ENCODE measurements at regions of chr2 and their contacts with region 1.

Region 1: GRCh38 chr2:102418421-102418961 is 4.5 kb upstream of the IL18RAP start:
- DNase-seq: no peak
- ATAC-seq: peak; percentile 79
- H3K4me3 Mint-ChIP-seq: peak overlapping the region; percentile 73
- H3K27ac Mint-ChIP-seq: peak overlapping the region; percentile 86
- H3K4me1 Mint-ChIP-seq: peaks cover 63% of the 10 kb centered on the region
- H3K27me3 Mint-ChIP-seq: no peaks in the 10 kb centered on the region

Region 2: DNA sequence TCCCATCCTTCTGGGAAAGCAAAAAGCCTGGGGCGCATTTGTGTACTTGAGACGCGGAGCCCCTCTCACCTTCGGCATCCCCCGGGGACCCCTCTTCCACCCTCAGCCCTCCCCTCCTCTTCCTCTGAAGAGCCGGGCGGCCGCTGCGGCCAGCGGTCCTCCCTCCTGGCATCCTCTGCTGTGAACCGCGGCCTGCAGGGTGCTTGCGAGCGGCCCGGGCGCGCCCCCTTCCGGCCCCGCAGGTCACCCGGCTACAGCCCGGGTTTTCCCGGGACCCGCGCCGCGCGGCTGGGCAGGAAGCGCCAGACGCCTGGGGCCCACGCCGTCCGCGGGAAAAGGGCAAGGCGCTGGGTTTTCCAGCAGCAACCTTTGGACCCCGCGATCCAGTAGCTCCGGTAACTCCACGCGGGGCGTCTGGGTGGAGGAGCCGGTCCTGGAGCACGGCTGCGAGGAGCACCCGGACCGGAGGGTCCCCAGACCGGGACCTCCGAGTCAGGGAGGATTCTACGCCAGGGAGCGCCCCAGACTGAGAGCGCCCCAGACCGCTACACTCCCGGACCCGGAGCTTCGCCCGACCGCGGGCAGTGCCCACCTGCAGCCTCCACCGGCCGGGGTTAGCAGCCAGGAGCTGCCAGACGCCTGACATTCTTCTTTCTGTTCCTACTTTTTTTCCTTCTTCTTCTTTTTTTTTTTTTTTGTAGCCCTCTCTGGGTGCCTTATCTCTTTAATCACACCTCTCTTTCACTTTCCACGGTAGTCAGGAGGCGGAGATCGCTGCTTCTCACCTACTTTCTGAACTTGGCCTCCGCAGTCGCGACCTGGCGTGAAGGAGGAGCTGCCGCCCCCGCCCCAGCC is 62.7 kb before region 1 on chr2 and contains the start of gene IL18R1:
- CTCF ChIA-PET with region 1: interaction called, 11 read pairs
- DNase-seq: peak; percentile 78
- ATAC-seq: peak; percentile 93
- H3K4me3 Mint-ChIP-seq: peak within 1 kb of the TSS; percentile 98
- H3K27ac Mint-ChIP-seq: peak within 1 kb of the TSS; percentile 92
- H3K4me1 Mint-ChIP-seq: peaks cover 38% of the 10 kb centered on the region
- H3K27me3 Mint-ChIP-seq: peaks cover 4% of the 10 kb centered on the region
- total RNA-seq, gene IL18R1: 19.8 to 25.9 TPM

Region 3: GRCh38 chr2:102428573-102428972 is 10.1 kb after region 1 on chr2:
- CTCF ChIA-PET with region 1: interaction called, 13 read pairs
- DNase-seq: no peak
- ATAC-seq: no peak
- H3K4me3 Mint-ChIP-seq: no peak overlapping the region
- H3K27ac Mint-ChIP-seq: peak overlapping the region; percentile 3
- H3K4me1 Mint-ChIP-seq: peaks cover 47% of the 10 kb centered on the region
- H3K27me3 Mint-ChIP-seq: no peaks in the 10 kb centered on the region

Region 4: DNA sequence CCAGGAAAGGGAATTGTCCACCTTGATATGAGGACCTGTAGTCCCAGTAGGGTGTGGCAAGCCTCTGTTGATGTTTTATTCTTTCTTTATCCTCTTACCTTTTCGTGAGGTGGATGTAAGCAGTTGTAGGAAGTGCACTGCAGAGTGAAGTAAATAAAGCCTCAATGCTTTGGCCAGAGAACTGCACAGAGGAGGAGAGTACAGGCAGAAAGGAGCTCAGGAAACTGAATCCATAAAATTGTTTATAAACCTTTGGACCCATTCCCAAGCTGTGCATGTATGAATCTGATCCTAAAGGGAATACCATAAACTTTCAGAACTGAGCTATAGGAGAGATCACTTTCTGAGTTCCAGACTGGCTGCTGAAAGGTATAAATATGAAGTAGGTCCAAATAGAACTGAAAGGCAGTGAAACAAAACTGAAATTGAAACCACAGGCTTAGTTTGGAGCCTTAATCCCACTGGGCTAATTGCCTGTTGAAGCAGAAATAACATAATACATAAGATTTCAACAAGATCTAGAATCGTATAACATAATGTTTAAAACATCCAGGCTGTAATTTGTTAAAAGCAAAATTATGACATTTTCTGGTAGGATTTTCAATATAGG is 36.7 kb after region 1 on chr2:
- CTCF ChIA-PET with region 1: no interaction called
- DNase-seq: no peak
- ATAC-seq: no peak
- H3K4me3 Mint-ChIP-seq: no peak overlapping the region
- H3K27ac Mint-ChIP-seq: no peak overlapping the region
- H3K4me1 Mint-ChIP-seq: peaks cover 6% of the 10 kb centered on the region
- H3K27me3 Mint-ChIP-seq: peaks cover 10% of the 10 kb centered on the region

Measured in activated CD8-positive, alpha-beta memory T cell treated with anti-CD3 and anti-CD28 coated beads, Interleukin-2, amount 10 ng/mL, durations not matched to agents 7 days and 5 days (primary cell).